ENCODE measurements at regions of chr2 and their contacts with region 1.

Region 1: DNA sequence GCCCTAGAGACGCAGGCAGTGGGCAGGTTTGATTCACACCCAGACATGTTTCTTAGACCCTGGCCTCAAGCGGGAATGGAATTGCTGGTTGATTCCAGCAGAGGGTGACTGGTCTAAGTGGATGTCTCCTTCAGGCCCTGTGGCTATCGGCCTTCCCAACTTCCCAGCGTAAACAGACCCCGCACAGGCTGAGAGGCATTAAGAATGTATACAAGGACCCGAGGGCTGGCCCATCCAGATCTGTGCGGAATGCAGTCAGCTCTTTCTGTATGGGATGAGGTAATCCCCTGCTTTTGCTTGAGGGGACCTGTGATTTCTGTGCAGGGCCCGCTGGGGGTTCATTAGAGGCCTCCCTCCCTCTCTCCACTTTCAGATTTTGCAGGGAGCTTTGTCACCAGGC is 6.5 kb downstream of the ACKR3 start:
- DNase-seq: peak in 1 of 2 donors; percentile 76
- H3K4me3 ChIP-seq: no peak overlapping the region
- H3K27ac ChIP-seq: peak overlapping the region; percentile 12 to 93 (median 51)
- H3K4me1 ChIP-seq: peaks cover 18 to 96% (median 62%) of the 10 kb centered on the region in 4 donors
- H3K27me3 ChIP-seq: no peaks in the 10 kb centered on the region
- CTCF ChIP-seq: no peak
- EP300 ChIP-seq: no peak
- POLR2A ChIP-seq: no peak

Region 2: DNA sequence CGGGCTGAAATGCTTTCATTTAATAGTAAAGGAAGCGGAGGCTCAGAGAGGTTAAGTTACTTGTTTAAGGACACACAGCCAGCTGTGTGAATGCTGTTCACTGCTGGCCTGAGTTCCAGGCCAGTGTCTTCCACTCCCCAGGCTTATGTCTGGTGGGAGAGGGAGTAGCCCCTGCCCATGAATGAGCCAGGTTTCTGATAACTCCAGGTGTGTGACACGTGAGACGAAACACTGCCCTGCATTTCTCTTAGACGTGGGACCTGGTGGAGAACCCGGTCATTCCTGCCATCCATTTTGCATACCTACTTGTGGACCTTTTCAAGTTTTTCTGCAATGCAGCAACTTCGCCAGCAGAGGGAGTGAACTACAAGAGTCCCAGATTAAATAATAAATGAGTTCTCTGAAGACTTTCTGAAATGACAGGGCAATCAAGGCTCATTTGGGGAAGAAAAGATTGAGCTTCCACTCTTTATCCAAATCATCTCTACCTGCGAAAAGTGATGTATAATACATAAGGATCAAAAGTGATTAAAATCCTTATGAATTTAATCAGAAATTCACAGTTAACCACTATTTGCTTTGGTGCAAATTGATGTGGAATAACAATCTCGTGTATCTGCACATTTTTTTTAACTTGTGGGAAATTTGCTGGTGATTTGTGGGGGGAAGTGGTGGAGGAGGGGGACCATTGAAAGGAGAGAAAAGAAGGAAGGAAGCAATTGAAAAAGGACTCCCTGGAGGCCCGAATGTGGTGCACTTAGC is 232.5 kb before region 1 on chr2:
- intact Hi-C with region 1: loop called (anchors 10 kb)
- DNase-seq: peak; percentile 71 to 82
- H3K4me3 ChIP-seq: no peak overlapping the region
- H3K27ac ChIP-seq: no peak overlapping the region
- H3K4me1 ChIP-seq: peaks cover 0 to 9% (median 5%) of the 10 kb centered on the region in 4 donors
- H3K27me3 ChIP-seq: no peaks in the 10 kb centered on the region
- CTCF ChIP-seq: peak in 5 of 7 experiments; percentile 49 to 81 (median 76)
- EP300 ChIP-seq: no peak
- POLR2A ChIP-seq: no peak

Region 3: DNA sequence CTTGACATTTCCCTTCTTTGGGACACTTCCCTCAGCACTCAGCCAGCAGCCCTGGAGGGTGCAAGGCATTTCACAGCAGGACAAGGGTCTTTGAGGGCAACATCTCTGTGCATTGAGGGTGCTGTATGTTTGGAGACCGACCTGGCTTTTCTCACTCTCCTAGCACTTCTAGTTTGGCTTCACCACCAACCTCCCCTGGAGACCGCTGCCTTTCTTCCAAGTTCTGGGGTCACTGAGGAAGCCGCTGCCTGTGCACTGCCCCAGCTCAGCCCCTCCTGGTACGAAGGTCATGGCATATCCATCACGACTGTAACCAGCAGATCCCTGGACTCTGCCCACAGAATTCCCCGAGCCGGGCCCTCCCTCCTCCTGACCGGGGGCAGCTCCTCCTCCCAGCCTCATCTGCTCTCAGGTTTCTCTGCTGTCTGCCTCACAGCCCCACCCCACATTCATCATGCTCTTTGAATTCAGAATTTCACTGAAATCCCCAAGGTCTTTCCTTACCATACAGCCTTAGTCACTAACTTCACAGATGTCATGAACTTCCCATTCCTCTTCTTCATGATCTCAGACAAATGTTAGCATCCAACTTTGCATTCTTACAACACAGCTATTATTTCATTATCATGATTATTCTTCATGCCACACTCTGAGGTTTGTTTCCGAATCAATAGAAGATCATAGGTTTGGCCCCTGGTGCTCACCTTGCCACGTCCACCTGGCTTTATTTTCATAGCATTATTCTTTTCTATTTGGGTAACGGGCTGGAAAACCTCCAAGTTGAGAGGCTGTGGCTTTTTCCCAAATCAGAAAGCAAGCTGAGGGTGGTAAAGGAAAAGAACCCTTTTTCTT is 396.6 kb after region 1 on chr2:
- intact Hi-C with region 1: no loop called
- DNase-seq: peak in 1 of 2 donors; percentile 69
- H3K4me3 ChIP-seq: no peak overlapping the region
- H3K27ac ChIP-seq: peak overlapping the region in 3 of 5 donors; percentile 33 to 44 (median 37)
- H3K4me1 ChIP-seq: peaks cover 0 to 29% (median 6%) of the 10 kb centered on the region in 4 donors
- H3K27me3 ChIP-seq: no peaks in the 10 kb centered on the region
- CTCF ChIP-seq: no peak
- EP300 ChIP-seq: no peak
- POLR2A ChIP-seq: no peak

Region 4: DNA sequence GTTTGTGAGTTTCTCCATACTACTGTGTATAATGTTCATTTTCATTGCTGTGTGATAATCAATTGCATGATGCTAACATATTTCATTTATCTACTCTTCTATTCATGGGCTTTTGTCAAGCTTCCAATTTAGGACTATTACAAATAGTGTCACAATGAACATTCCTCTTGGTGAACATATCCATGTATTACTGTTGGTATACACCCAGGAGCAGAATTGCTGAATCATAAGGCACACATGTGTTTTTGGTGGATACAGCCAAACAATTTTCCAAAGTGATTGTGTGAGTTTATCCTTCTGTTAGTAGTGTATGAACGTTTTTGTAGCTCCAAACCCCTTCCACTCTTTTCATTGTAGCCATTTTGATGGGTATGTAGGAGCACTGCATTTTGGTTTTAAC is 408.0 kb after region 1 on chr2:
- intact Hi-C with region 1: no loop called
- DNase-seq: no peak
- H3K4me3 ChIP-seq: no peak overlapping the region
- H3K27ac ChIP-seq: no peak overlapping the region
- H3K4me1 ChIP-seq: peaks cover 0 to 28% (median 13%) of the 10 kb centered on the region in 4 donors
- H3K27me3 ChIP-seq: no peaks in the 10 kb centered on the region
- CTCF ChIP-seq: no peak
- EP300 ChIP-seq: no peak
- POLR2A ChIP-seq: no peak